A673 (cell line): ENCODE measurements at regions of chr11 and their contacts with region 1.

Region 1: GRCh38 chr11:46392421-46393230 is 1.1 kb upstream of the CHRM4 start:
- DNase-seq: peak; percentile 92
- H3K4me3 ChIP-seq: peak overlapping the region; percentile 51
- H3K27ac ChIP-seq: no peak overlapping the region
- H3K4me1 ChIP-seq: peaks cover 39% of the 10 kb centered on the region
- H3K27me3 ChIP-seq: peaks cover 47% of the 10 kb centered on the region
- CTCF ChIP-seq: peak; percentile 7; the same call in 1 of the 2 replicates

Region 2: GRCh38 chr11:46380340-46381047 is 12.1 kb before region 1 on chr11:
- CTCF ChIA-PET with region 1: interaction called, 13 read pairs
- POLR2A ChIA-PET with region 1: no interaction called
- intact Hi-C with region 1: no loop called
- DNase-seq: peak; percentile 77
- H3K4me3 ChIP-seq: peak overlapping the region; percentile 62
- H3K27ac ChIP-seq: peak overlapping the region; percentile 80
- H3K4me1 ChIP-seq: peaks cover 24% of the 10 kb centered on the region
- H3K27me3 ChIP-seq: no peaks in the 10 kb centered on the region
- CTCF ChIP-seq: no peak

Region 3: DNA sequence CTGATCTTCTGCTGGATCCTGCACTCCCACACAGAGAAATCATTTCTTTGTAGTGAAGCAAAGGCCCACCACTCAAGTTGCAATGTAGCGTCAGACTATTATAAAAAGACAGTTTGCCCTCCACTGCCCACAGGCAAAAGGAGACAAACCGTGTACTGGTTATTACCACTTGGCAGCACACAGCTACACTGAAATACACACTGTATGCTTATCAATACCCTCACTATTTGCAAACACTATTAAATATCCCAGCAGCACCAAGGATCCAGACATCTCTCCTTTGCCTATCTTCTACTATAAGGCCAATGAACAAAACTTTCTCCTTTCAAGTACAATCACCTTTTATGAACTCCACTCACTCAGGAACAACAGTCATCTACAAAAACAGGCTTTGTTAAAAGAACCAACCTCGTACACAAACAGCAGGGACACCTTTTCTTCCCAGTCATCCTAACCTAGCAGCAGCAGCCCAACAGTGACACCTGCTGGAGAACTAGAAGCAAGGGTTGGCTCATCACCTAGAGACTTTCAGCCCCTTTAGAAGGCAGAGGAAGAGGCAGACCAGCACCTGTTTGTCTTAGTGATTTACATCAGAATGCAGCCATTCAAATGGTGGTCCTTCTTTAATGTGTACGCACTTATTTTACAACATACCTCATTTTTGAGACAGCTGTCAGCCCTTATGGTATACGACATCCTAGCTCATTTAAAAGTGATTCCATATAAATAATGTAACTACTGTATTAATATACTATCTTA is 145.1 kb after region 1 on chr11:
- CTCF ChIA-PET with region 1: interaction called, 7 read pairs
- POLR2A ChIA-PET with region 1: no interaction called
- intact Hi-C with region 1: loop called (anchors 1 kb)
- DNase-seq: peak; percentile 96
- H3K4me3 ChIP-seq: no peak overlapping the region
- H3K27ac ChIP-seq: peak overlapping the region; percentile 1
- H3K4me1 ChIP-seq: peaks cover 30% of the 10 kb centered on the region
- H3K27me3 ChIP-seq: no peaks in the 10 kb centered on the region
- CTCF ChIP-seq: peak; percentile 100

Region 4: DNA sequence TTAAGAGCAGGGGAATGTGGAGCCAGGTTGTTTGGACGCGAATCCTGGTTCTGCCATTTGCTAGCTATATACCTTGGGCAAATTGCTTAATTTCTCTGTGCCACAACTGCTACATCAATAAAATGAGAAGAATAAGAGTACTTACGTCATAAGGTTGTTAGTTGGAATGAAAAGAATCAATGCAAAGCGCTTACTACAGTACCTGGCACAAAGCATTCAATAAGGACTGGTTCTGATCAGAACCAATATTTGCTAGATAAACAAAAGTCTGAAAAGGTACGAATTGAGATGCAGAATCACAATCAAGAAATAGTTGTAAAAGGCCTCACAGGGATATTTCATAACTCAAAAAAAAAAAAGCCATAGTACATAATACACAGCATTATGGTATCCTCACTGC is 190.0 kb after region 1 on chr11:
- CTCF ChIA-PET with region 1: no interaction called
- POLR2A ChIA-PET with region 1: no interaction called
- intact Hi-C with region 1: no loop called
- DNase-seq: no peak
- H3K4me3 ChIP-seq: no peak overlapping the region
- H3K27ac ChIP-seq: no peak overlapping the region
- H3K4me1 ChIP-seq: no peaks in the 10 kb centered on the region
- H3K27me3 ChIP-seq: no peaks in the 10 kb centered on the region
- CTCF ChIP-seq: no peak

Region 5: GRCh38 chr11:46724088-46724487 is 331.5 kb after region 1 on chr11:
- CTCF ChIA-PET with region 1: no interaction called
- POLR2A ChIA-PET with region 1: no interaction called
- intact Hi-C with region 1: loop called (anchors 10 kb)
- DNase-seq: no peak
- H3K4me3 ChIP-seq: no peak overlapping the region
- H3K27ac ChIP-seq: no peak overlapping the region
- H3K4me1 ChIP-seq: no peaks in the 10 kb centered on the region
- H3K27me3 ChIP-seq: no peaks in the 10 kb centered on the region
- CTCF ChIP-seq: no peak

Region 6: DNA sequence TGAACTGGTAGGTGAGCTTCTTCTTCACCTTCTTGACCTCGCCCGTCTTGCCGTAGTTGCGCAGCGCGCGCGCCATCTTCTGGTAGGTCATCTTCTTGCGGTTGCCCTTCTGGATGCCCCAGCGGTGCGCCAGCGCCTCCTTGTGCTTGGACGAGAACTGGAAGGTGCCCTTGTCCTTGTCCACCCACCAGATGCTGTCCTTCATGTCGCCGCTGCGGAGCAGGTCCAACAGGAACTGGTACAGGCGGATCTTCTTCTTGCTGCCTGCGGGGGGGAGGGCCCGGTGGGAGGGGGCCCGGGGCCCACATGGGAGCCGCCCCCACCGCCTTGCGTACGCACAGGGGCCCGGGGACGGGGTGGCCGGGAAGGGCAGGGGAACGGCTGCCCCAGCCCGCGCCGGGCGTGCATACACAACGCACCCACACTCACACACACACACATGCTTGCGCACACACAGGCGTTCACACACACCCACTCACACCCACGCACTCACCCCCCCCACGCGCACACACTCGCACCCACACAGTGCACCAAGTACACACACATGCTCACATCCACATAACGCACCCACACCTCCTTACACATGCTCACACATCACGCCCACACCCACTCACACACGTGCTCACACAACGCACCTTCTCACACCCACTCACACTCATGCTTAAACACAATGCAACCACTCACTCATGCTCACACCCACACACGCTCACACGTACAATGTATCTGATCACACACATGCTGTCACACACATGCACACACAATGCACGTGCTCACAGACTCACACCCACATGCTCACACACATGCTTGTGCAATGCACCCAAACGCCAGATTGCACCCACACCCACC is 962.9 kb after region 1 on chr11:
- CTCF ChIA-PET with region 1: no interaction called
- POLR2A ChIA-PET with region 1: no interaction called
- intact Hi-C with region 1: loop called (anchors 10 kb)
- DNase-seq: peak; percentile 99
- H3K4me3 ChIP-seq: peak overlapping the region; percentile 50
- H3K27ac ChIP-seq: peak overlapping the region; percentile 18
- H3K4me1 ChIP-seq: peaks cover 5% of the 10 kb centered on the region
- H3K27me3 ChIP-seq: no peaks in the 10 kb centered on the region
- CTCF ChIP-seq: peak; percentile 100